ENCODE measurements at regions of chr13 and their contacts with region 1.

Region 1: DNA sequence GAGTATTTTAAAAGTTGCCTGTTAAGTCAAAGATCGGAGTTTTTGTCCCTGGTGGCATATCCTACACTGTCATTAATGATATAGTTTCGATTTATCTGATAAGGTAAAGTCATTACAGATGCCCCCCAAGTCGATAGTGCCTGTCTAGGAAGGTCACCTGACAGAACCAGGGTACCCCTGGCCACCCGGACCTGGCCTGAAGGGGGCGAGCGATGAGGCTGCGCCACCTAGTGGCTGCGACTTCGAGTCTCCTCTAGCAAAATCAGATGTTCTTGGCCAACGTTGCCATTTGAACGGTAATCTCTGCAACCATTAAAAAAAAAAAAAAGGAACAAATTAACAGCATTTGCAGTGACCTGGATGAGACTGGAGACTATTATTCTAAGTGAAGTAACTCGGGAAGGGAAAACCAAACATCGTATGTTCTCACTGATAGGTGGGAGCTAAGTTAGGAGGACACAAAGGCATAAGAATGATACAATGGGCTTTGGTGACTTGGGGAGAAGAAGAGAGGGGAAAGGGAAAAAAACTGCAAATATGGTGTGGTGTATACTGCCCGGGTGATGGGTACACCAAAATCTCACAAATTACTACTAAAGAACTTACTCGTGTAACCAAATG is 565.1 kb downstream of the LIG4 start:
- DNase-seq: no peak
- H3K4me3 ChIP-seq: no peak overlapping the region
- H3K27ac ChIP-seq: no peak overlapping the region
- H3K4me1 ChIP-seq: no peaks in the 10 kb centered on the region
- H3K27me3 ChIP-seq: no peaks in the 10 kb centered on the region
- CTCF ChIP-seq: peak in 3 of 4 experiments; percentile 41 to 46 (median 42)
- POLR2A ChIP-seq: no peak

Region 2: GRCh38 chr13:107211073-107211472 is 439.1 kb before region 1 on chr13:
- intact Hi-C with region 1: loop called (anchors 2 kb)
- DNase-seq: peak; percentile 49
- H3K4me3 ChIP-seq: no peak overlapping the region
- H3K27ac ChIP-seq: no peak overlapping the region
- H3K4me1 ChIP-seq: no peaks in the 10 kb centered on the region
- H3K27me3 ChIP-seq: no peaks in the 10 kb centered on the region
- CTCF ChIP-seq: peak; percentile 53 to 70 (median 64)
- POLR2A ChIP-seq: no peak

Region 3: GRCh38 chr13:107376341-107377085 is 273.7 kb before region 1 on chr13:
- intact Hi-C with region 1: loop called (anchors 5 kb)
- DNase-seq: no peak
- H3K4me3 ChIP-seq: no peak overlapping the region
- H3K27ac ChIP-seq: no peak overlapping the region
- H3K4me1 ChIP-seq: no peaks in the 10 kb centered on the region
- H3K27me3 ChIP-seq: no peaks in the 10 kb centered on the region
- CTCF ChIP-seq: no peak
- POLR2A ChIP-seq: no peak

Measured in prostate gland (tissue), 2 donors.